ENCODE measurements at regions of chr1 and their contacts with region 1.

Region 1: GRCh38 chr1:204600968-204601367 is 84.6 kb downstream of the LRRN2 start:
- DNase-seq: no peak
- H3K4me3 ChIP-seq: no peak overlapping the region
- H3K27ac ChIP-seq: no peak overlapping the region
- H3K4me1 ChIP-seq: peaks cover 10 to 20% (median 11%) of the 10 kb centered on the region in 4 experiments
- H3K27me3 ChIP-seq: no peaks in the 10 kb centered on the region
- CTCF ChIP-seq: peak; percentile 48 to 69 (median 62)
- EP300 ChIP-seq: no peak
- POLR2A ChIP-seq: no peak
- RAD21 ChIP-seq: peak; percentile 24 to 47

Region 2: DNA sequence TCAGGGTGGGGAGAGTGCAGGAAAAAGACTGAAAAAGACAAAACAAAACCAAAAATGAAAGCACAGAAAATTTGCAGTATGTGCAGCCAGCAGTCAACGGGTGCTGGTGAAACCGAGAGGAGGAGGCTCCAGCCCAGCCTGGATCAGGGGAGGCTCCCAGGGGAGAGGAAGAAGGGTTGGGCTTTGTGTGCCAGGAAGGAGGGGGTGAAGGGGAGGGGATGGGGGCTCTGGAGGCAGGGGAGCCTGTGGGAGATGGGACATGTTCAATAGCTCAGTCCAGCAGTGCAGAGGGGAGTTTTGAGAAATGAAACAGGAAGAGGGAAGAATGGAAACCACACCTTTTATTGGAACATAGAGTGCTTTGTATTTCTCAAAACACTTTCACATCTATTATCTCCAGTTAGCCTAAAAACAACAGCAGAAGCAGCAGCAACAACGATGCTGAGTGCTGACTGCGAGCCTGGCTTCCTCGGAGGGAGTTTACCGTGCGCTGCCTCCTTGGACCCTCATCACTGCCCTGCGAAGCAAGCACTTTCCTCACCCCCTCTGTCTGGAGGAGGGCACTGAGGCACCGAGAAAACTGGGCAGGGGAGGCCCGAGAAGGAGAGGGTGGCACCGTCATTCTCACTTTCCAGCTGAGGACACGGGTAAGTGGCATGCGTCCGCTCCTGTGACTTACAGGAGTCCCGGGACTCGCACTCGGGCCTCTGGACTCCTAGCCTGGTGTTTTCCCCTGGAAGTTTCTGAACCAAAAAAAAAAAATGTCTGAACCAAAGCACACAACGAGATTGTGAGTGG is 21.9 kb before region 1 on chr1:
- CTCF ChIA-PET with region 1: interaction called, 33 read pairs
- POLR2A ChIA-PET with region 1: interaction called, 3 read pairs
- DNase-seq: no peak
- H3K4me3 ChIP-seq: peak overlapping the region in 1 of 4 experiments; percentile 3; a peak in 2 of 8 replicates
- H3K27ac ChIP-seq: no peak overlapping the region
- H3K4me1 ChIP-seq: peaks cover 18 to 40% (median 27%) of the 10 kb centered on the region in 4 experiments
- H3K27me3 ChIP-seq: peaks cover 0 to 12% (median 4%) of the 10 kb centered on the region in 4 experiments; a peak in 3 of 7 replicates
- CTCF ChIP-seq: no peak
- EP300 ChIP-seq: no peak
- POLR2A ChIP-seq: no peak
- RAD21 ChIP-seq: no peak

Region 3: GRCh38 chr1:204615881-204616280 is 14.9 kb after region 1 on chr1:
- CTCF ChIA-PET with region 1: interaction called, 30 read pairs
- POLR2A ChIA-PET with region 1: interaction called, 8 read pairs
- DNase-seq: no peak
- H3K4me3 ChIP-seq: no peak overlapping the region
- H3K27ac ChIP-seq: no peak overlapping the region
- H3K4me1 ChIP-seq: peaks cover 0 to 4% (median 1%) of the 10 kb centered on the region in 4 experiments; a peak in 3 of 7 replicates
- H3K27me3 ChIP-seq: no peaks in the 10 kb centered on the region; a peak in 1 of 7 replicates
- CTCF ChIP-seq: no peak
- EP300 ChIP-seq: no peak
- POLR2A ChIP-seq: no peak
- RAD21 ChIP-seq: no peak

Measured in H1 (cell line).